Dendritic cell treated with granulocyte-macrophage colony-stimulating factor and Interleukin-4, amounts not matched to agents 40 ng/mL and 50 ng/mL, for 4 days (primary cell): ENCODE measurements at regions of chr15 and their contacts with region 1.

Region 1: GRCh38 chr15:72199711-72200212 is 2.2 kb upstream of the GRAMD2A start:
- H3K4me3 Mint-ChIP-seq: no peak overlapping the region
- H3K27ac Mint-ChIP-seq: no peak overlapping the region
- H3K4me1 Mint-ChIP-seq: peaks cover 55% of the 10 kb centered on the region
- H3K27me3 Mint-ChIP-seq: peaks cover 36% of the 10 kb centered on the region

Region 2: DNA sequence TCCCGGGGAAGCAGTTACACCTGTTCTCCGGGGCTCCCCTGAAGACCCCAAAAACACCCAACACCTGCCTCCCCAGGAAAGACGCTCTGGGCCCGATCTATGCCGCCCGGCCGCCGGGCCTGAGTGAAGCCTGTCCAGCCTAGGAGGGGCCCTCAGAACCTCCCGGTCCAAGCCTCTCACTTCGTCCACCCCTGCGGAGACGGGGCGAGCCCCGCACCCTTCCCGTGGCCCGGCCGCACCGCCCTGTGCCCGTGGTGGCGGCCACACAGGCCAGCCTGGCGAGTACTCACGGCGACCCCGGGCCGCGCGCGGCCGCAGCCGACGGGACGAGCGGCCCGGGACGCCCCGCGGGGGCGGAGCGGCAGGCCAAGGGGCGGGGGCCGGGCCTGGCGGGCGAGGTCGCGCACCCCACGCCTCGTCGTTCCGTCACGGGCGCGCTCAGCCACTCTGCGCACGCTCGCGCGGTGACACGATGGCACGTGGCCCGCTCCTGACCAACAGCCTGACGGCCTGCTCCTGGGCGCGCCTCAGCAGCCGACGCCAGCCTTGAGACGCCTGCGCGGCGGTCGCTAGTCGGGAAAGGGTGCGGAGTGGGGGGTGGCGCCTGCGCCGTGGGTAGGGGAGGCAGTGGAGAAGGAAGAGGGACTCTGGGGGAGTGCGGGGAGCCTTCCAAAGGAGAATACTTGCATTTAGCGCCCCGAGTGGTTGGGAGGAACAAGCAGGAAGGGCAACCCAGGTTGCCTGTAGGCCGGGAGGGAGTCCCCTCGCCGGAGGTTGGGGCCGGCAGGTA is 72.6 kb after region 1 on chr15 and contains the start of gene PARP6:
- intact Hi-C with region 1: loop called (anchors 5 kb)
- H3K4me3 Mint-ChIP-seq: peak within 1 kb of the TSS; percentile 85
- H3K27ac Mint-ChIP-seq: peak within 1 kb of the TSS; percentile 83
- H3K4me1 Mint-ChIP-seq: peaks cover 35% of the 10 kb centered on the region
- H3K27me3 Mint-ChIP-seq: peaks cover 8% of the 10 kb centered on the region

Region 3: GRCh38 chr15:72285927-72286516 is 86.3 kb after region 1 on chr15:
- intact Hi-C with region 1: loop called (anchors 5 kb)
- H3K4me3 Mint-ChIP-seq: no peak overlapping the region
- H3K27ac Mint-ChIP-seq: no peak overlapping the region
- H3K4me1 Mint-ChIP-seq: no peaks in the 10 kb centered on the region
- H3K27me3 Mint-ChIP-seq: no peaks in the 10 kb centered on the region